Activated T-helper 1 cell treated with anti-CD3 and anti-CD28 coated beads, Interleukin-12 subunit alpha, Interleukin-12 subunit beta, Interleukin-2, Interleukin-4 antibody, amounts not matched to agents 30 ng/mL and 10 ng/mL and 1 ng/mL, durations not matched to agents 14 hours and 24 hours and 36 hours (primary cell): ENCODE measurements at regions of chr17 and their contacts with region 1.

Region 1: DNA sequence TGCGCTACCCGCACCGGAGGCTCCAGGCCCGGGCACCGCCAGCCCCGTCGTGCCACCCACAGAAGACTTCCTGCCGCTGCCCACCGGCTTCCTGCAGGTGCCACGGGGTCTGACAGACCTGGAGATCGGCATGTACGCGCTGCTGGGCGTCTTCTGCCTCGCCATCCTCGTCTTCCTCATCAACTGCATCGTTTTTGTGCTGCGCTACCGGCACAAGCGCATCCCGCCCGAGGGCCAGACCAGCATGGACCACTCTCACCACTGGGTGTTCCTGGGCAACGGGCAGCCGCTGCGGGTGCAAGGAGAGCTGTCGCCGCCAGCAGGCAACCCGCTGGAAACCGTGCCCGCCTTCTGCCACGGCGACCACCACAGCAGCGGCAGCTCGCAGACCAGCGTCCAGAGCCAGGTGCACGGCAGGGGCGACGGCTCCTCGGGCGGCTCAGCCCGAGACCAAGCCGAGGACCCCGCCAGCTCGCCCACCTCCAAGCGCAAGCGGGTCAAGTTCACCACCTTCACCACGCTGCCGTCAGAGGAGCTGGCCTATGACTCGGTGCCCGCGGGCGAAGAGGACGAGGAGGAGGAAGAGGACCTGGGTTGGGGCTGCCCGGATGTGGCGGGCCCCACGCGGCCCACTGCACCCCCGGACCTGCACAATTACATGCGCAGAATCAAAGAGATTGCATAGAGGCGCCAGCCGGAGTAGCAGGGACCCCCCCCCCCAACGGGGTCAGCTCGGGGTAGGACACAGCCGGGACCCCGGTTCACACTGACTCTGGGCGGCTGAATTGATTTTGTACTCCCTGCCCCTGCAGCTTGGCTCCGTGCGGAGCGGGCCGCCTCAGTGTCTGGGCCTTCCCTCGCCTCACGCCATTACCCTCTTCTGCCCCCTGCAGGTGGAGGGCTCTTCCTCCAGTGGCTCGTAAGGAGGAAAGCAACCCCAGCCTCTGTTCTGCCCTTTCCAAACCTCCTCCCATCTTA is 58.5 kb downstream of the TMEM132E start:
- DNase-seq: peak; percentile 66
- H3K4me3 Mint-ChIP-seq: no peak overlapping the region
- H3K27ac Mint-ChIP-seq: no peak overlapping the region
- H3K4me1 Mint-ChIP-seq: no peaks in the 10 kb centered on the region
- H3K27me3 Mint-ChIP-seq: peaks cover 29% of the 10 kb centered on the region

Region 2: DNA sequence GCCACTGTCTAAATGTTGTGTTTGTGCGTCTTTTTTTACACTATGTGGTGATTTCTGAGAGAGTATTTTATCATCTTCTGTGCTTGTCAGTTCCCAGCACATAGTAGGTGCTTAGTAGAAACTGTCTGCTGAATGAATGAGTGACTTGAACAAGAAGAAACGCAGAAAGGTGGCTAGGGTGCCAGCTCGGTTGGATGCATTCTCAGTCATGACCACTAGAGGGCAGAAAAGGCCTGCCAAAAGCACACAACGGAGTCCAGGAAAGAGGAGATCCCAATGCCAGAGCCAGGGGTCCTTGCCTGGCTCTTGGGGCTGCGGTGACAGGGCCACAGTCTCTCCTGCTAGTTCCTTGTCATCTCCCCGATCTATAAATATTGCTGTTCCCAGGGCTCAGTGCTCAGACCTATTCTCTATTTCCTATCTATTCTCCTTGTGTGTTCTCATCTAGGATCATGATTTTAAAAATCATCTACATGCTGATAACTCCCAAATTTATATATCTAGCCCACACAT is 217.5 kb before region 1 on chr17:
- intact Hi-C with region 1: loop called (anchors 1 kb)
- DNase-seq: peak; percentile 30
- H3K4me3 Mint-ChIP-seq: no peak overlapping the region
- H3K27ac Mint-ChIP-seq: no peak overlapping the region
- H3K4me1 Mint-ChIP-seq: no peaks in the 10 kb centered on the region
- H3K27me3 Mint-ChIP-seq: peaks cover 51% of the 10 kb centered on the region

Region 3: DNA sequence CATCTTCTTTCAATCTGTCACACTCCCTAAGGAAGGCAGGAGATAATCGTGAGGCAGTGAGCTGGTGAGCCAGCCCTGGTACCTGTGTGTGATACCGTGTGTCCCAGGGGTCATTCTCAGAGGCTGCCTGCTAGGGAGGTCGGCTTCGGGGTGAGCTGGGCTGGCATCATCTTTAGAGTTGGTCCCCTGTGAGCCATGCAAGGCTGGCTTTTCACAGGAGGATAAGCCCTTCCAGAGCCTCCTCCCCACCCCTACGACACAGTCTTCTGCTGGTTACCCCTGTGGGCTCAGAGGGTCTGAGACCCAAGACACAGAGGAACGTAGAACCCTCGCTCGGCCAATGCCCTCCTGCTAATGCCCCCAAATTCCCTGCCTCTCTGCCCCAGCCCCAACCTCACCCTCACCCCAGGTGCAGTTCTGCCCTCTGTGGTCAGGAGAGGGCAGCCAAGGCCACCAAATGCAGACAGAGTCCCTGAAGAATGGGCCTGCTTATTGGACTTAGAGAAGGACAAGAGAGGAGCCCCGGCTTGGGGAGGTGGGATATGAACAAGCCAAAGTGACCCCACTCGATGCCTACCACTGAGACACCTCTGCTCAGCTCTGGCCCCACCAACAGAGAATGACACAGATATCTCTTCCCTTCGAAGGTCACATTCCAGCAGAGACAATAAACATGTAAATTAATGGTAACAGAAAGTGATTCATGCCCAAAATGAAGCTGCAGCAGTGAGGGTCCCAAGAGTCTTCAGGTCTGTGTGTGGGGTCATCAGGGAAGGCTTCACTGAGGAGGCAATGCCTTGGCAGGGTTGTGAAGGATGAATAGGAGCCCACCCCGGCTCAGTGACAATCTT is 194.0 kb before region 1 on chr17:
- intact Hi-C with region 1: loop called (anchors 5 kb)
- DNase-seq: no peak
- H3K4me3 Mint-ChIP-seq: no peak overlapping the region
- H3K27ac Mint-ChIP-seq: no peak overlapping the region
- H3K4me1 Mint-ChIP-seq: no peaks in the 10 kb centered on the region
- H3K27me3 Mint-ChIP-seq: peaks cover 15% of the 10 kb centered on the region

Region 4: DNA sequence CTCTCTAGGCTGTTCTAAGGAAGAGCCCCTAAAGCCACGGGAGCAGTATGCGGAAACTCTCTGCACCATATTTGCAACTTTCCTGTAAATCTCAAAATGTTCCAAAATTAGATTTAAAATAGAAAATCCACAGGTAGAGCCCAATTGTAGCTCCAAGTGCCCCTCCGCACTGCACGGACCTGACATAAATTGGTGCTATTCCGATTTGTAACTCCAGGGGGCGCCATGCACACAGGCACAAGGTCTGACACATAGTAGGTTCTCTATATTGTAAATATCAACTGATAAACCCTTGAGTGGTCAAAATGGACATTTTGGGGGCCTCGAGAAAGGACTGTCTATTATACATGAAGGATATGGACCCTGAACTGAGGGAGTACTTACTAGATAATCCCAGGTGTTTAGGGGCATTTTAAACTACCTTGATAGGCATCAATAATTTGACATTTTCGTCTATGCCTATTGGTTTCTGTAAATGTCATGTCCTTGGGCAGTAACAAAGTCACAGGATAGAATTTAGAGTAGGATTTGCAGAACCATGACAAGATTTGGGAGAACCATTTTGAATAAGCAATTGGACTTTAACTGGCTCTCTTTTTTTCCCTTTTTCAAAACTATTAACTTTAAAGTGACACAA is 95.0 kb before region 1 on chr17:
- intact Hi-C with region 1: loop called (anchors 1 kb)
- DNase-seq: peak; percentile 17
- H3K4me3 Mint-ChIP-seq: no peak overlapping the region
- H3K27ac Mint-ChIP-seq: no peak overlapping the region
- H3K4me1 Mint-ChIP-seq: no peaks in the 10 kb centered on the region
- H3K27me3 Mint-ChIP-seq: peaks cover 21% of the 10 kb centered on the region

Region 5: GRCh38 chr17:34584805-34585416 is 52.9 kb before region 1 on chr17:
- intact Hi-C with region 1: loop called (anchors 2 kb)
- DNase-seq: no peak
- H3K4me3 Mint-ChIP-seq: no peak overlapping the region
- H3K27ac Mint-ChIP-seq: no peak overlapping the region
- H3K4me1 Mint-ChIP-seq: no peaks in the 10 kb centered on the region
- H3K27me3 Mint-ChIP-seq: peaks cover 52% of the 10 kb centered on the region

Region 6: DNA sequence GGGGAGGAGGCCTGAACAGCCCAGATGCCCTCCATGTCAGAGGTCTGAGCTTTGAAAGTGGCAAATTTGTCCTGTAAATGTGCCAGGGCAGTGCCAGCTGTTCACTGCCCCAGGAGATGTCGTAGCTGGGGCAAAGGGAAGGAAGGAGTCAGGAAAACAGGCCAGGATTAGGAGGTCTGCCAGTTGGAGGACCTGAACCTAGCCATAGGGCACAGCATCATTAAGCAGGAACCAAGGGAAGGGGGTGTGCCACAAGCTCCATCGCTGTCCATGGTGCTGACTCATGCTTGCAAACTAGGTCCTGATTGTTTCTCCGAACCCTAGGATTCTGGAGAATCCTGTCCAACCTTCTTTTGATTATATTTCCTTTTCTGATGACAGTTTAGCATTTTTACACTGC is 65.7 kb after region 1 on chr17:
- intact Hi-C with region 1: no loop called
- DNase-seq: no peak
- H3K4me3 Mint-ChIP-seq: no peak overlapping the region
- H3K27ac Mint-ChIP-seq: no peak overlapping the region
- H3K4me1 Mint-ChIP-seq: no peaks in the 10 kb centered on the region
- H3K27me3 Mint-ChIP-seq: no peaks in the 10 kb centered on the region